ENCODE measurements at regions of chr5 and their contacts with region 1.

Region 1: GRCh38 chr5:180494060-180494509 is at the start of gene CNOT6:
- DNase-seq: peak; percentile 95
- H3K4me3 ChIP-seq: peak within 1 kb of the TSS; percentile 82 to 94 (median 88)
- H3K27ac ChIP-seq: peak within 1 kb of the TSS; percentile 90 to 95 (median 94)
- H3K4me1 ChIP-seq: peaks cover 0 to 33% (median 24%) of the 10 kb centered on the region in 4 donors
- H3K27me3 ChIP-seq: no peaks in the 10 kb centered on the region
- CTCF ChIP-seq: no peak
- EP300 ChIP-seq: no peak
- POLR2A ChIP-seq: no peak
- total RNA-seq, gene CNOT6: 16.0 to 21.8 (median 17.8) TPM

Region 2: DNA sequence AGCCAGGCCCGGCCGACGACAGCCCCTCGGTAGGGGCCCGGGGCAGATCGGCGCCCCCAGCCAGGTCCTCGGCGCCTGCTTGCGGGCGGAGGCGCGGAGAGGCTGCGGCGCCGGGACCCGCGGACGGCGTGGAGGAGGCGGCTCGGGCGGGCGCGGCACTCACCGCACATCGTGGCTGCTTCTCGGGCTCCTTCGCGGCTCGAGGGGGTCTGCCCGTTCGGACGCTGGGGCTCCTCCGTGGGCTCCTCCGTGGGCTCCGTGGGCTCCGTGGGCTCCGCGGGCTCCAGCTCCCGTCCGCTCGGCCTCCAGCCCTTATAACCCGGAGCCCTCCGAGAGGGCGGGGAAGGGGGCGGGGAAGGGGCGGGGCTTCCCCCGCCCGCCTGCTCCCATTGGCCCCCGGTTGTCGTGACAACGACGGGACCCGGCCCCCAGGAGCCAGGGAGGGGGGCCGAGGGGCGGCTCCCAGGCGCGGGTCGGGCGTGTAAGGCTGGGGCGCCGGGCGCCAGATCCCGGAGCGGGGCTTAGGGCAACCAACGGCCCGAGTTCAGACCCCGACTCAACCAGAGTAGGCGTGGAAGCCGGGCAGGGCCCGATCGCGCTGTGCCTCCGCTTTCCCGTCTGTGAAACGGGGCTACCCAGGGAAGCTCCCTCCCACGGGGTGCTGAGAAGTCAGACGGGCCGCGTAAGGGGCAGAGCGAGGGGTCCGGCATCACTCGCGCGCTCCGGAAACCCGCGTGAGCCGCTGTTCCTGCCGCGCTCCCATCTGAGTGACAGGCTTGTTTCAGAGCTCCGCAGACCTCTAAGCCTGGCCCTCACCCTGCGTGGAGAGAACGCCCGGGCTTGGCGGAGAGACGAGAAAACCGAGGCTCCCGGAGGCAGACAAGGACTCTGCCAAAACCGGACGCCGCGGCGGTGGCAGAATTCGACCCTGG is 140.8 kb before region 1 on chr5 and contains the start of gene GFPT2:
- intact Hi-C with region 1: loop called (anchors 5 kb)
- DNase-seq: peak; percentile 93
- H3K4me3 ChIP-seq: peak within 1 kb of the TSS; percentile 49 to 85 (median 65)
- H3K27ac ChIP-seq: peak within 1 kb of the TSS; percentile 75 to 80 (median 77)
- H3K4me1 ChIP-seq: peaks cover 0 to 31% (median 23%) of the 10 kb centered on the region in 4 donors
- H3K27me3 ChIP-seq: peaks cover 0 to 21% (median 5%) of the 10 kb centered on the region in 3 donors
- CTCF ChIP-seq: no peak
- EP300 ChIP-seq: no peak
- POLR2A ChIP-seq: no peak
- total RNA-seq, gene GFPT2: 16.1 to 42.7 (median 21.7) TPM

Region 3: GRCh38 chr5:180390441-180391190 is 103.5 kb before region 1 on chr5:
- intact Hi-C with region 1: no loop called
- DNase-seq: no peak
- H3K4me3 ChIP-seq: no peak overlapping the region
- H3K27ac ChIP-seq: no peak overlapping the region
- H3K4me1 ChIP-seq: no peaks in the 10 kb centered on the region
- H3K27me3 ChIP-seq: no peaks in the 10 kb centered on the region
- CTCF ChIP-seq: no peak
- EP300 ChIP-seq: no peak
- POLR2A ChIP-seq: no peak

Region 4: DNA sequence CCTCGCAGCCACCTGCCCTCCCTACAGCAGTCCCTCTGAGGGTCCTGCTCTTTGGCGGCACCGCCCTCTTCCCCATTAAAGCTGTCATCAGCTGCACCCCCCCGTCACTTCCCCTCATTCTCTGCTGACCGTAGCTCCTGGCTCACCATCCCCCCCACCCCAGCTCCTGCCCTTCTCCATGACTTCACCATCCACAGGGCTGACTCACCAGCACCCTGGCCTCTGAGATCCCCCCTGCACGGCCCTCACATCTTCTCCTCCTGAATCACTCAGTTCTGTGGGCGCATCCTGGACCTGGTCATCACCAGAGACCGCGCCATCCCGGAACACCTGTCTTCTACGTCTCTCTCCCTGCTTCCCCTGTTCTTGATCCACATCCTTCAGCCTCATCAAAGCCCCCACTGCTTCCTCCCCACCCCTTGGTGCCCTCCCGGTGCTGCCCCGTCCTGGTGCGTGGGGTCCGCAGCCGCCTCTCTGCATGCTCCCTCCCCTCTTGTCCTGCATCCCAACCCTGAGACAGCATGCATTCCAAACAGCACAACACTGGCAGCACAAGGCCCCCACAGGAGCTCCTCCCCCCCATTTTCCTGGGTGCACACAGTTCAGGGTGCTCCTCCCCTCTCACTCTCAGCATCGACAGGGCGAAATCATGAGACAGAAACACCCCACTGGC is 142.5 kb after region 1 on chr5:
- intact Hi-C with region 1: no loop called
- DNase-seq: peak; percentile 63
- H3K4me3 ChIP-seq: no peak overlapping the region
- H3K27ac ChIP-seq: no peak overlapping the region
- H3K4me1 ChIP-seq: no peaks in the 10 kb centered on the region
- H3K27me3 ChIP-seq: peaks cover 0 to 17% (median 0%) of the 10 kb centered on the region in 3 donors
- CTCF ChIP-seq: no peak
- EP300 ChIP-seq: no peak
- POLR2A ChIP-seq: no peak

Measured in sigmoid colon (tissue), 7 donors.